ENCODE measurements at regions of chr1 and their contacts with region 1.

Region 1: DNA sequence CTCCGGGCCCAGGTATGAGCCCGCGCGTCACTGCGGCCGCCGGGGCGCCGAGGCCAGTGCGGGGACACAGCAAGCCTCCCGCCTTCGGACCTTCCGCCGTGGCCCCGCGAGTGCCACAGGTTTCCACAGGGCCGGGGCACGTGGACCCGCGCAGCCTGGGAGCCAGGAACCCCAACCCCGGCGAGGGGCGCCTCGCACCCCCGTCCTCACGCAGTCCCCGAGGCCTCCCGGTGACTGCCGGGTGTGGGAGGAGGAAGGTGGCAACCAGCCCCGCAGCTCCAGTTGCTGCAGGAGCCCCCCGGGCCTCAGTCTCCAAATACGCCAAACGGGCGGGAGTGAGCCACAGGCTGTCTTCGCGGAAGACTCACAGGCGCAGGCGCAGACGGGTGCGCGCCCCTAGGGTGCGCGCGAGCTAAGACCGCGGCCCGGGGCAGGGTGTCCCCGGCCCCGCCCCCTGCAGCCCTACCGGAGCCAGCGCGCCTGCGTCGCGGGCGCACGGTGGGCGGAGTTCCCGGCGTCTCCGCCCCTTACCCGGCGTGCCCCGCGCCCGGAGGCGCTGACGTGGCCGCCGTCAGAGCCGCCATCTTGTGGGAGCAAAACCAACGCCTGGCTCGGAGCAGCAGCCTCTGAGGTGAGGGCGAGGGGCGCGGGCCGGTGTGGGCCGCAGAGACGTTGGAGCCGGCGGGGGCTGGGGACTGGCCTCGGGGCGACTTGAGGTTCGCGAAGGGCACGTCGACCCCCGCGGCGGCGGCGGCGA is at the start of gene ARF1:
- DNase-seq: peak; percentile 97
- ATAC-seq: peak; percentile 90
- H3K4me3 Mint-ChIP-seq: peak within 1 kb of the TSS; percentile 93
- H3K27ac Mint-ChIP-seq: peak within 1 kb of the TSS; percentile 88
- H3K4me1 Mint-ChIP-seq: peaks cover 45% of the 10 kb centered on the region
- H3K27me3 Mint-ChIP-seq: no peaks in the 10 kb centered on the region
- CTCF ChIP-seq: no peak
- total RNA-seq, gene ARF1: 209 and 213 TPM in 2 replicates

Region 2: GRCh38 chr1:227787513-227788270 is 294.6 kb before region 1 on chr1:
- CTCF ChIA-PET with region 1: no interaction called
- POLR2A ChIA-PET with region 1: interaction called, 8 read pairs
- intact Hi-C with region 1: loop called (anchors 2 kb)
- DNase-seq: peak; percentile 83
- ATAC-seq: peak; percentile 93
- H3K4me3 Mint-ChIP-seq: peak overlapping the region; percentile 86
- H3K27ac Mint-ChIP-seq: peak overlapping the region; percentile 61
- H3K4me1 Mint-ChIP-seq: peaks cover 22% of the 10 kb centered on the region
- H3K27me3 Mint-ChIP-seq: no peaks in the 10 kb centered on the region
- CTCF ChIP-seq: no peak

Region 3: GRCh38 chr1:228050571-228051231 is 31.6 kb before region 1 on chr1:
- CTCF ChIA-PET with region 1: no interaction called
- POLR2A ChIA-PET with region 1: no interaction called
- intact Hi-C with region 1: no loop called
- DNase-seq: no peak
- ATAC-seq: no peak
- H3K4me3 Mint-ChIP-seq: no peak overlapping the region
- H3K27ac Mint-ChIP-seq: no peak overlapping the region
- H3K4me1 Mint-ChIP-seq: no peaks in the 10 kb centered on the region
- H3K27me3 Mint-ChIP-seq: peaks cover 35% of the 10 kb centered on the region
- CTCF ChIP-seq: no peak

Region 4: DNA sequence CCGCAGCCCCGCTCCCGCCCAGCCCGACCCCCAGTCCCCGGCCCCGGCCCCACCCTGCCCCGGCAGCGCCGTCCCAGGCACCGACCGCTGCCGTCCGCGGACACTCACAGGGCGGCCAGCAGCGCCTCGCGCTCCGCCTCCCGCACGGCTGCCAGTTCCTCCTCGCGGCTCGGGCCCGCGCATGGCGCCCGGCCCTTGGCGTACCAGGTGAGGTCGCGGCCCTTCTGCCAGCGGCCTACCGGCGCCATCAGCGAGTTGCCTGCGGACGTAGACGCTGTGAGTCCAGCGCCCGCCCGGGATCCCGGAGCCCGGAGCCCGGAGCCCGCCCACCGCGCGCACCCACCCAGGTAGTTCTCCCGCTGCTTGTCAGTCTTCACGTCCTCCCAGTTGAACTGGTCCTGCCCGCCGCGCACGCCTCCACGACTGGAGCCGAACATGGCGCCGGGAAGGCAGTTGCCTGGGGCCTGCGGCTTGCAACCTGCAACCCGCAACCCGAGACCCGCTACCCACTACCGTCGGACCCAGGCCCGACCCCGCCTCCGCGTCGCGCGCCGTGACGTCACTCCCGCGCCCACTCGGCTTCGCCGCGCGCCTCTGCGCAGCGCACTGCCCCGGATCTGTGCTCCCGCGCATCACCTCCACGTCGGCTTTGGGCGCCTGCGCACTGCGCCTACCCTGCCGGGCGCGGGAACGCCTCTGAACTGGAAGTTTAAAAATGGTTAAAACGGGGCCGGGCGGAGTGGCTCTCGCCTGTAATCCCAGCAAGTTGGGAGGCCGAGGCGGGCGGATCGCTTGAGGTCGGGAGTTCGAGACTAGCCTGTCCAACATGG is 20.7 kb after region 1 on chr1 and contains the start of gene C1orf35:
- CTCF ChIA-PET with region 1: no interaction called
- POLR2A ChIA-PET with region 1: interaction called, 20 read pairs
- intact Hi-C with region 1: loop called (anchors 1 kb)
- DNase-seq: peak; percentile 90
- ATAC-seq: peak; percentile 87
- H3K4me3 Mint-ChIP-seq: peak within 1 kb of the TSS; percentile 94
- H3K27ac Mint-ChIP-seq: peak within 1 kb of the TSS; percentile 86
- H3K4me1 Mint-ChIP-seq: peaks cover 30% of the 10 kb centered on the region
- H3K27me3 Mint-ChIP-seq: no peaks in the 10 kb centered on the region
- CTCF ChIP-seq: no peak
- total RNA-seq, gene C1orf35: 11.9 and 13.3 TPM in 2 replicates

Region 5: GRCh38 chr1:228139944-228140656 is 57.8 kb after region 1 on chr1 and contains the start of gene GUK1:
- CTCF ChIA-PET with region 1: no interaction called
- POLR2A ChIA-PET with region 1: interaction called, 9 read pairs
- intact Hi-C with region 1: loop called (anchors 1 kb)
- DNase-seq: peak; percentile 99
- ATAC-seq: peak; percentile 92
- H3K4me3 Mint-ChIP-seq: peak within 1 kb of the TSS; percentile 96
- H3K27ac Mint-ChIP-seq: peak within 1 kb of the TSS; percentile 99
- H3K4me1 Mint-ChIP-seq: peaks cover 71% of the 10 kb centered on the region
- H3K27me3 Mint-ChIP-seq: no peaks in the 10 kb centered on the region
- CTCF ChIP-seq: no peak
- total RNA-seq, gene GUK1: 104 and 119 TPM in 2 replicates

Region 6: GRCh38 chr1:229270547-229271447 is 1188.5 kb after region 1 on chr1 and contains the start of gene RAB4A:
- CTCF ChIA-PET with region 1: no interaction called
- POLR2A ChIA-PET with region 1: no interaction called
- intact Hi-C with region 1: loop called (anchors 1 kb)
- DNase-seq: peak; percentile 87
- ATAC-seq: peak; percentile 93
- H3K4me3 Mint-ChIP-seq: peak within 1 kb of the TSS; percentile 91
- H3K27ac Mint-ChIP-seq: peak within 1 kb of the TSS; percentile 87
- H3K4me1 Mint-ChIP-seq: peaks cover 34% of the 10 kb centered on the region
- H3K27me3 Mint-ChIP-seq: no peaks in the 10 kb centered on the region
- CTCF ChIP-seq: no peak
- total RNA-seq, gene RAB4A: 40.2 and 42.3 TPM in 2 replicates